Calu3 (cell line): ENCODE measurements at regions of chr10 and their contacts with region 1.

Region 1: GRCh38 chr10:98790802-98791201 is 344.1 kb upstream of the HPS1 start:
- DNase-seq: no peak
- H3K4me3 Mint-ChIP-seq: no peak overlapping the region
- H3K27ac Mint-ChIP-seq: no peak overlapping the region
- H3K4me1 Mint-ChIP-seq: no peaks in the 10 kb centered on the region
- H3K27me3 Mint-ChIP-seq: no peaks in the 10 kb centered on the region
- CTCF ChIP-seq: no peak

Region 2: GRCh38 chr10:98815039-98815885 is 24.5 kb after region 1 on chr10:
- CTCF ChIA-PET with region 1: no interaction called
- intact Hi-C with region 1: no loop called
- DNase-seq: no peak
- H3K4me3 Mint-ChIP-seq: no peak overlapping the region
- H3K27ac Mint-ChIP-seq: no peak overlapping the region
- H3K4me1 Mint-ChIP-seq: no peaks in the 10 kb centered on the region
- H3K27me3 Mint-ChIP-seq: peaks cover 12% of the 10 kb centered on the region
- CTCF ChIP-seq: no peak

Region 3: GRCh38 chr10:98825741-98826140 is 34.9 kb after region 1 on chr10:
- CTCF ChIA-PET with region 1: no interaction called
- intact Hi-C with region 1: no loop called
- DNase-seq: no peak
- H3K4me3 Mint-ChIP-seq: no peak overlapping the region
- H3K27ac Mint-ChIP-seq: no peak overlapping the region
- H3K4me1 Mint-ChIP-seq: no peaks in the 10 kb centered on the region
- H3K27me3 Mint-ChIP-seq: no peaks in the 10 kb centered on the region
- CTCF ChIP-seq: no peak

Region 4: GRCh38 chr10:99172130-99172738 is 381.4 kb after region 1 on chr10:
- CTCF ChIA-PET with region 1: no interaction called
- intact Hi-C with region 1: loop called (anchors 5 kb)
- DNase-seq: peak; percentile 35
- H3K4me3 Mint-ChIP-seq: no peak overlapping the region
- H3K27ac Mint-ChIP-seq: no peak overlapping the region
- H3K4me1 Mint-ChIP-seq: no peaks in the 10 kb centered on the region
- H3K27me3 Mint-ChIP-seq: peaks cover 20% of the 10 kb centered on the region
- CTCF ChIP-seq: peak; percentile 45

Region 5: DNA sequence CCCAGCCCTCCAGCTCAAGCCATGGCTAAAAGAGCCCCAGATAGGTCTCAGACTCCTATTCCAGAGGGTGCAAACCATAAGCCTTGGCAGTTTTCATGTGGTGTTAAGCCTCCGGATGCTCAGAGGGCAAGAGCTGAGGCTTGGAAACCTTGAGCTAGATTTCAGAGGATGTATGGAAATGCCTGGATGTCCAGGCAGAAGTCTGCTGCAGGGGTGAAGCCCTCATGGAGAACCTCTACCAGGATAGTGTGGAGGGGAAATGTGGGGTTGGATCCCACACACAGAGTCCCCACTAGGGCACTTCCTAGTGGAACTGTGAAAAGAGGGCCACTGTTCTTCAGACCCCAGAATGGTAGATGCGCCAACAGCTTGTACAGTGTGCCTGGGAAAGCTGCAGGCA is 458.0 kb after region 1 on chr10:
- CTCF ChIA-PET with region 1: no interaction called
- intact Hi-C with region 1: loop called (anchors 5 kb)
- DNase-seq: no peak
- H3K4me3 Mint-ChIP-seq: no peak overlapping the region
- H3K27ac Mint-ChIP-seq: no peak overlapping the region
- H3K4me1 Mint-ChIP-seq: no peaks in the 10 kb centered on the region
- H3K27me3 Mint-ChIP-seq: peaks cover 13% of the 10 kb centered on the region
- CTCF ChIP-seq: no peak

Region 6: GRCh38 chr10:99370993-99371392 is 580.2 kb after region 1 on chr10:
- CTCF ChIA-PET with region 1: no interaction called
- intact Hi-C with region 1: loop called (anchors 5 kb)
- DNase-seq: peak; percentile 20
- H3K4me3 Mint-ChIP-seq: no peak overlapping the region
- H3K27ac Mint-ChIP-seq: no peak overlapping the region
- H3K4me1 Mint-ChIP-seq: peaks cover 9% of the 10 kb centered on the region
- H3K27me3 Mint-ChIP-seq: no peaks in the 10 kb centered on the region
- CTCF ChIP-seq: peak; percentile 29